ENCODE measurements at regions of chr2 and their contacts with region 1.

Region 1: DNA sequence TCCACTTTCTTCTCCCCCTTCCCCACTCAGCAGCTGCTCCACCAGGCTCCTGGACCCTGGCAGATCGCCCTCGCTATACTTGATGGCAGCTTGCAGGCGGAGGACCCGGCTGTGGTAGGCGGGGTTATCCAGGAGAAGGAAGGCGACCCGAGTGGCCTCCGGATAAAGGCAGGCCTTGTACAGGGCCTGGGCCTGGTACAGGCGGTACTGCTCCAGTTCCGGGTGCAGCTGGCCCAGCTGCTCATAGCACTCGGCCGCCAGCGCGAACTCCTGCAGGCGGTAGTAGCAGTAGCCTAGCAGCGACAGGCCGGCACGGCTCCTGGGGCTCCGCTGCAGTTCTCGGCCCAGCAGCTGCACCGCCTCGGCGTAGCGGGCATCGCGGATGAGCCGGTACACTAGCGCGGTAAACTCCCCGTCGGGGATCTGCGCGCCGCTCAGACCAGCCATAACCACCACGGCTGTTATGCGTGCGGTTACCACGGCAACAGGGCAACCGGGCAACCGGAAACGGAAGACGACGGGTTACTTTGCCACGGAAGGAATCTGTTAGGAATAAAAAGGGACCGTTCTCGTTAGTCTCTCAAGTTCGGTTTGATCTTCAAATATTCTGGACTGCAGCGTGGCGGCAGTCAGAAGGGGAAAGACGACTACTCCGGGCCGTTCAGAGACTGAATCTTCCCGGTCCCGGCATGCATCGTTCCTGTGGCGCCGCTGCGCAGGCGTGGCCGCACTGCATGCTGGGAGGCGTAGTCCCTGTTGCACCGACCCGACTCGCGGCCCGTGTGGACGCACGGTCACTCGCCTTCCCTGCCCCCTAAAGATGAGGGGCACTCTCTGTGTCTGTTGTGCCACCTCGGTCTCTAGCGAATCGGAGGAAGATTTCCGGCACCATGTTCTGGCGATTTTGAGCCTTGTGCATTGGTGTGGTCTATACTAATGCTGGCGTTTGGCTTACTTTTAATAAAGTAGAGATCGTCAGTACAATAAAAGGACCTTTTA is 226.0 kb downstream of the AGPS start:
- DNase-seq: peak; percentile 87
- ATAC-seq: peak; percentile 89
- H3K4me3 Mint-ChIP-seq: peak overlapping the region; percentile 97
- H3K27ac Mint-ChIP-seq: peak overlapping the region; percentile 100
- H3K4me1 Mint-ChIP-seq: peaks cover 7% of the 10 kb centered on the region
- H3K27me3 Mint-ChIP-seq: peaks cover 3% of the 10 kb centered on the region
- CTCF ChIP-seq: no peak

Region 2: DNA sequence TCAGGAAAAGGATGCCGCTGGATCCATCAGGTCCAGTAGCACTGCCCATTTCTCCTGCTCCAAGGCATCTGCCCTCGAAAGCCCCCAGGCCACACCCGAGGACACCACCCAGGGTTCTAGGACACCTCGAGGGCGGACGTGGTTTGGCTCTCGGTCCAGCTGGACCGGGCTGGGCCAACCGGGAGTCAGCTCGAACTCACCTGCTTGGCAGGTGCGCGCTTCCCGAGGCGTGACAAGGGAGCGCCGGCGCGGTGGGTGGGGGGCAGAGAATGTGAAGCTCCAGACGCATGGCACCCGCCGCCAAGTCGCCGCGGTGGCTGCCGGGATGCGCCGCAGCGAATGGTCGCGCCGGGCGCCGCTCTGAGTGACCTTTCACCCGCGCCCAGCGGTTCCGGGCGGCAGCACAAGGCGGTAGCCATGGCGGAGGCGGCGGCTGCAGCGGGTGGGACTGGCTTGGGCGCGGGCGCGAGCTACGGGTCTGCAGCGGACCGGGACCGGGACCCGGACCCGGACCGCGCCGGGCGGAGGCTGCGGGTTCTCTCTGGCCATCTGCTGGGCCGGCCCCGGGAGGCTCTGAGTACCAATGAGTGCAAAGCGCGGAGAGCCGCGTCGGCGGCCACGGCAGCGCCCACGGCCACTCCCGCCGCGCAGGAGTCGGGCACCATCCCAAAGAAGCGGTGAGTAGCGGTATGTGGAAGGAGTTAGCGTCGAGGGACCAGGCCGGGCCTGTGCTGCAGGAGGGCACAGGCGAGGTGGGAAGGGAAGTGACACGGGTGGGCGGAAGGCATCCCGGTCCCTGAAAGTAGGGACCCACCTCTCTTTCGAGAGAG is 226.0 kb before region 1 on chr2 and contains the start of gene AGPS:
- CTCF ChIA-PET with region 1: no interaction called
- POLR2A ChIA-PET with region 1: no interaction called
- intact Hi-C with region 1: loop called (anchors 5 kb)
- DNase-seq: peak; percentile 66
- ATAC-seq: peak; percentile 93
- H3K4me3 Mint-ChIP-seq: peak within 1 kb of the TSS; percentile 92
- H3K27ac Mint-ChIP-seq: peak within 1 kb of the TSS; percentile 69
- H3K4me1 Mint-ChIP-seq: peaks cover 42% of the 10 kb centered on the region
- H3K27me3 Mint-ChIP-seq: no peaks in the 10 kb centered on the region
- CTCF ChIP-seq: no peak
- total RNA-seq, gene AGPS: 29.0 and 29.9 TPM in 2 replicates

Region 3: GRCh38 chr2:177629357-177630024 is 10.9 kb after region 1 on chr2:
- CTCF ChIA-PET with region 1: interaction called, 3 read pairs
- POLR2A ChIA-PET with region 1: no interaction called
- intact Hi-C with region 1: loop called (anchors 1 kb)
- DNase-seq: no peak
- ATAC-seq: no peak
- H3K4me3 Mint-ChIP-seq: no peak overlapping the region
- H3K27ac Mint-ChIP-seq: no peak overlapping the region
- H3K4me1 Mint-ChIP-seq: peaks cover 16% of the 10 kb centered on the region
- H3K27me3 Mint-ChIP-seq: no peaks in the 10 kb centered on the region
- CTCF ChIP-seq: no peak

Measured in activated B cell treated with CpG ODN at 0.5 μM for 24 hours (primary cell).